Mammary epithelial cell (primary cell): ENCODE measurements at regions of chr2 and their contacts with region 1.

Region 1: DNA sequence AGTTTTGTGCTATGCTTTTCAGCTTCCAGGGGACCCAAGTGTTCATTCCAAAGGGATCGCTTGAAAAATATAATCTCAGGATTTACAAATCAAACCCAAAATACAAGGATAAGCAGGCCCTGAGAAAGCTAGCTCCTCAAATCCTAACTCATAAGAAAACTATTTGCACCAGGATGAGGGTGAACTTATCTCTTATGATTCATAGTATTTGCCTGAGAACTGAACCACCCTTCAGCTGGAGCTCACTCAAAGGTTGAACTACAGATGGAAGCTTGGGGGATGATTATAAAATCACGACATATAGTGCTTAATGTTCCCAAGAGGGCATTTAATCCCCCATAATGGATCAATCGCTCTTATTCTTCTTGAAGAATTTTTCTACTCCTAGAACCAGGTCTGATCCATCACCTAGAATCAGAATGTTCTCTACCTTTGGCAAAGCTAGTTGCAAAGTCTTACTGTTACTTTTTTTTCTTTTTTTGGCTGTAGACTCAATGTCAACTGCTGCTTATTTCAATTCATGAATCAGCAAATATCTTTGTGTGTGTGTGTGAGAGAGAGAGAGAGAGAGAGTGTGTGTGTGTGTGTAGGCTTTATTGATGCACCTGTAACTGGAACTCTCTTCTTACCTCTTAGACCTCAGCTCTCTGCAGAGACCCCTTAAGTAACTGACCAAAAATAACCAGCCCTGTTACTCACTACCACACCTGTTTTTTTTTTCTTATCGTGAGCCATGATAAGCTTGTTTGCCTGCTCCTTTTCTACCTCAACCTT is 44.8 kb downstream of the ARL4C start:
- DNase-seq: peak; percentile 61
- H3K4me3 ChIP-seq: no peak overlapping the region
- H3K27ac ChIP-seq: peak overlapping the region; percentile 49
- H3K4me1 ChIP-seq: peaks cover 40% of the 10 kb centered on the region
- H3K27me3 ChIP-seq: no peaks in the 10 kb centered on the region
- CTCF ChIP-seq: no peak

Region 2: DNA sequence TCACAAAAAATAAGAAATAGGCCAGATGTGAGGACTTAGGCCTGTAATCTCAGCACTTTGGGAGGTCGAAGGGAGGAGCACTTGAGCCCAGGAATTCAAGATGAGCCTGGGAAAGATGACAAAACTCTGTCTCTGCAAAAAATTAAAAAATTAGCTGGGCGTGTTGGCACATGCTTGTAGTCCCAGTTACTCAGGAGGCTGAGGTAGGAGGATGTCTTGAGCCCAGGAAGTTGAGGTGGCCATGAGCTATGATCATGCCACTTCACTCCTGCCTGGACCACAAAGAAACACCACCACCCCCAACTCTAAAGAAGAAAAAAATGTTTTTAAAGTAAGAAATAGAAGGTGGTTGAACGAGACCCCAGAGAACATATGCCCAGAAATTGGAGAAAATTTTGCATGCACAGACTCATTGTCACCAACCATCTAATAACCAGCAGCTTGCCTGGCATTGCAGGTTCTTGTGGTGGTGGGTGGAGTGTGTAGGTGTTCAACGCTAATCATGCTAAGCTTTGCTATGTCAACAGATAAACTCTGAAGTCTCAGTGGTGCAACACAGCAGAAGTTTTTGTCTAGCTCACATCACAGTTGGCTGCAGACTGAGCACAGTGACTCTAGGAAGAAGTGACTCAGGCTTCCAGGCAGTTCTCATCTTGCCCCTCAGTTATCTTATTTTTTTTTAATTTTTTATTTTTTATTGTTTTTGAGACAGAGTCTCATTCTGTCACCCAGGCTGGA is 26.3 kb after region 1 on chr2:
- CTCF ChIA-PET with region 1: no interaction called
- dilution Hi-C with region 1: no loop called
- in situ Hi-C with region 1: no loop called
- intact Hi-C with region 1: no loop called
- DNase-seq: peak; percentile 37
- H3K4me3 ChIP-seq: no peak overlapping the region
- H3K27ac ChIP-seq: no peak overlapping the region
- H3K4me1 ChIP-seq: peaks cover 14% of the 10 kb centered on the region
- H3K27me3 ChIP-seq: no peaks in the 10 kb centered on the region
- CTCF ChIP-seq: no peak

Region 3: DNA sequence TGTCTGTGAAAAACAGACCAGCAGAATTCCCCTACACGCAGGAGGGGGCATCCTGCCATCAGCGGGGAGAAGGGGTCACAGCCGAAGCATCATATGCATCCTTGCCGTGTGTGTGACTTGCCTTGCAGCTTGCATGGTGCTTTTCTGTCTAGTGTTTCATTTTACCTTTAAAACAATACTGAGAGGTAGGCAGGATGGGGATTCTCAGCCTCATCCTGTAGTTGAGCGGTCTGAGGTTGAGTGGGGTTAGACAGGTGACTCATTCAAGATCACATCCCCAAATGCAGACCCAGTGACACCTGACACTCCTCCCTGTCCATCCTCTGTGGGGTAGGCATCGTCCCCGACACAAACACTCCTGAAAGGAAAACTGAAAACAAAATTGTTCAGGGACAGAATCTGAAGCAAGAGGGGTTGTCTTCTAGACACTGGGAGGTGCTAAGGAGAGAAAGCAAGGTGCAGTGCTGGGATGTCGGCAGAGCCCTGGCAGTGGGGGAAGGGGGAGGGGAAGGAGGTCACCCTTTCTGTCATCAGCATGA is 36.9 kb after region 1 on chr2:
- CTCF ChIA-PET with region 1: no interaction called
- dilution Hi-C with region 1: loop called (anchors 5 kb)
- in situ Hi-C with region 1: no loop called
- intact Hi-C with region 1: no loop called
- DNase-seq: no peak
- H3K4me3 ChIP-seq: no peak overlapping the region
- H3K27ac ChIP-seq: no peak overlapping the region
- H3K4me1 ChIP-seq: peaks cover 16% of the 10 kb centered on the region
- H3K27me3 ChIP-seq: no peaks in the 10 kb centered on the region
- CTCF ChIP-seq: no peak